ENCODE measurements at regions of chr19 and their contacts with region 1.

Region 1: DNA sequence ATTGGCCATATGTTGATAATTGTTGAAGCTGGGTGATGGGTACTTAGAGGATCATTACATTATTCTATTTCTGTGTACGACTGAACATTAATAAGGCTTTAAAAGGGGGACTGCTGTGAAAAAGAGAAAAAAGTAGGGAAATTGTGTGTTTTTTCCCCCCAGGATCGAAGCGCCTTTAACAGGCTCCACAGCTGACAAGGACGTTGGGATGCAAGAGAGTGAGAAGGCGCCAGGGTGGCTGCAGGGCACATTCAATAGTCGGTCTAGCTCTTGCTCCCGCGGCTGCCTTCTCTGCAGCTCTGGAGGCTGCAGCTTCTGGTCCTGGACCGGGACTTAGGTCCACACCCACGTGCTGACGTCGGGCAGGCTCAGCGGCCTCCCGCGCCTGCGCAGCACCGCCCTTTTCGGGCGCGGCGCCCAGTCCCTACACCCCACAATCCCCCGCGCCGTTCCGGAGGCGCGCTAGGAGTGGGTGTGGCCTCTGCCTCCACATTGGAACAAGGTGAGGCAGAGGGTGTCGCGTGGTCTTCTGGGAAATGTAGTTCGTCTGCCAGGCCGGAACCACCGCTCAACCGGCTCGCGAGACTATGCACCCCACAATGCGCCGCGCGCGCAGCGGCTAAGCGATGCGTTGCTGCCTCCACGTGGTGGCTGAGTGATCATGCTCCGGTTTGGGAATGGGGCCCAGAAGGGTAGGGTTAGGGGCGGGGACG is 4.9 kb upstream of the LRFN3 start:
- DNase-seq: peak; percentile 100

Region 2: GRCh38 chr19:35693830-35694599 is 237.3 kb before region 1 on chr19:
- intact Hi-C with region 1: loop called (anchors 2 kb)
- DNase-seq: peak; percentile 92

Region 3: GRCh38 chr19:35740423-35741202 is 190.7 kb before region 1 on chr19:
- intact Hi-C with region 1: loop called (anchors 2 kb)
- DNase-seq: peak; percentile 99

Region 4: DNA sequence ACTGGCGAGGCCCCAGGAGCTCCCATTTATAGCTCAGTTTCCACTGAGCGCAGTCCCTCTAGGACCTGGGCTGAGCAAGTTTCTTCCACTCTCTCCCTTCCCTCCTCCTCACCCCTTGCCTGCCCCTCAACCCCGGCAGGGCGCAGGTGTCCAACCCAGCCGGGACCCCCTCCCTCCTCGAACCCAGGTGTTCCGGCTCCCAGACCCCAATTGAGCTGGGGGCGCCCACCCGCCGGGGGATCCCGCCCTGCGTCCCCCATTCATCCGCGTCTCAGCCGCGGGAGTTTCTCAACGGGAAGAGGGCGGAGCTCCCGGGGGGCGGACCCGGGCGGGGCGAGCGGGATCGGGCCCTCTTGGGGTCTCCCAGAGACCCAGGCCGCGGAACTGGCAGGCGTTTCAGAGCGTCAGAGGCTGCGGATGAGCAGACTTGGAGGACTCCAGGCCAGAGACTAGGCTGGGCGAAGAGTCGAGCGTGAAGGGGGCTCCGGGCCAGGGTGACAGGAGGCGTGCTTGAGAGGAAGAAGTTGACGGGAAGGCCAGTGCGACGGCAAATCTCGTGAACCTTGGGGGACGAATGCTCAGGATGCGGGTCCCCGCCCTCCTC is 74.7 kb before region 1 on chr19 and contains the start of gene KIRREL2:
- intact Hi-C with region 1: no loop called
- DNase-seq: no peak
- total RNA-seq, gene KIRREL2: not detected

Region 5: DNA sequence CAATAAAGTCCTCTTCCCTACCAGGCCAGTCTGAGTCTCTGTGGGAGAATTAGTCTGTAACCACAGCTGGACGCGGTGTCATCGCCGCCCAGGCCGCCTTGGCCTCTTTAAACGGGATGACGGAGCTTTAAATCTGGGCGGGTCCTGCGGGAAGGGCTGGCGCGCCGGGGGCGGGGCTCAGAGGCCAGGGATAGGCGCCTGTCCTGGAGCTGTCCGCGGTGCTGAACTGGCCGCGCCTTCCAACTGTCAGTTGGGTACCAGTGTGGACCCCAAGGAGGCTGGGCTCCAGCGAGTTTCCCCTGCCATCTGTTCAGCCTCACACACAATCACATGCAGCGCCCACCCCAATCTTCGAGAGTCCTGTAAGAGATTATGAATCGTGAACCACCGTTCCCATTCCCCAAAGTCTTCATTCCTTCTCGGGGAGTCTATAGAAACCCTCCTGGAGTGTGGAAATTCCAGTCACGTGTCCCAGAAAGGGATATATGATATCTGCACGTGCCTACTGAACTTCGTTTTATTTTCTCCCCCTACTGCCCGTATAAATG is 51.5 kb before region 1 on chr19:
- intact Hi-C with region 1: loop called (anchors 1 kb)
- DNase-seq: peak; percentile 94

Region 6: DNA sequence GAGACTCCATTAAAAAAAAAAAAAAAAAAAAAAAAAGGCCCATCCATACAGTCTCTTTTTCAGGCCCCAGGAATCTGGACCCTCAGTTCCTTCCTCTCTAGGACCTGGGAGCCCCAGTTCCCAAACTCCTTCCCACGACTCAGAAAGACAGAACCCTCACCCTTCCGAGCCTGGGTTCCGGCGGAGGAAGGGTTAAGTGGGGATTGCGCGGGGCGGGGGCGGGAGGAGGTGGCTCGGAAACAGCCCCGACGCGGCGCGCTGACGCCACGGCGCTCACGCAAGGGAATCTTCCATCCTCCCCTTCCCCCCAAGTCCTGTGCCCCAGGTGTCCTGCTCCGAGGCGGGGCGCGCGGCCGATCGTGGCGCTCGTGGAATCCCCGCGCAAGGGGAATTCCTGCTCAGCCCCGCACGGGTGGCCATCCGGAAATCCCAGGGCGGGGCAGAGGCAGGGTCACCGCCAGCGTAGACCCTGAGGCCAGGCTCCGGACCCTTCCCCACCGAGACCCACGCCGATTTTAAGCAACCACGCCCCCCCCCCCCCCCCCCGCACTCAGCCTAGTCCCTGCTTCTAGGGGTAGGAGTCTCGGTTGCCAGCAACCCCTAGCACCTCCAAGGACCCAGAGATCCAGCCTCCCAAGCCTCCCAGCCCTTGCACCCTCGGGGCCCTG is 31.6 kb before region 1 on chr19:
- intact Hi-C with region 1: loop called (anchors 2 kb)
- DNase-seq: peak; percentile 93

Measured in cardiac septum (tissue), 1 donor.